ENCODE measurements at regions of chr5 and their contacts with region 1.

Region 1: DNA sequence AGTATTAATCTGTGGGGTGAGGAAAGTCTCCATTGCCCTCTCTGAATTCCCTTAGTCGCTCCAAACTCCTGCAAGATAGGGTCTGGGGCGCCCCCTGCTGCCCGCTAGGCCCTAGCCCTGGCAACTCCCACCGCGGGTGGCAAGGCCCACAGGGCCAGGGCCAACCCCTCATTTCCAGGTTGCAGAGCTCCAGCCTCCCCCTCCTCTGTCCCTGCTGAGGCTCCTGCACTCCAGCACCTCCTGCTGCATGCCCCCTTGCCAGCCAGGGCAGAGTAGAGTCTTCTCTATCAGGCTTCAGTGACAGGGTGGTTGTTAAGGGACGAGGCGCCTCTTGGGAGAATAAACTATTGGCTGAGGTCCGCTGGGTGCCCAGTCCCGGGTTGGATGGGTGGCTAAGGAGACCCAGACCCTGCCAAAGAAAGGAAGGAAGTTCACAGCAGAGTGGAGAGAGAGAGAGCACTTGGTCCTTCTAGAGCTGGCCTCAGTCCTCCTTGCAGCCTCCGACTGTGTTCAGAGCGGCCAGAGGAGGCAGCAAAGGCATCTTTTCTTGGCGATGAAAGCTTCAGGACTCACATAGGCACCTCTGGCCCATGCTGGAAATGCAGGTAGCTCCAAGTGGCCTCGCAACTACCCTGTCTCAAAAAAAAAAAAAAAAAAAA is 45.6 kb downstream of the SAR1B start:
- DNase-seq: peak; percentile 89
- H3K4me3 ChIP-seq: no peak overlapping the region
- H3K27ac ChIP-seq: no peak overlapping the region
- H3K4me1 ChIP-seq: no peaks in the 10 kb centered on the region
- H3K27me3 ChIP-seq: no peaks in the 10 kb centered on the region

Region 2: DNA sequence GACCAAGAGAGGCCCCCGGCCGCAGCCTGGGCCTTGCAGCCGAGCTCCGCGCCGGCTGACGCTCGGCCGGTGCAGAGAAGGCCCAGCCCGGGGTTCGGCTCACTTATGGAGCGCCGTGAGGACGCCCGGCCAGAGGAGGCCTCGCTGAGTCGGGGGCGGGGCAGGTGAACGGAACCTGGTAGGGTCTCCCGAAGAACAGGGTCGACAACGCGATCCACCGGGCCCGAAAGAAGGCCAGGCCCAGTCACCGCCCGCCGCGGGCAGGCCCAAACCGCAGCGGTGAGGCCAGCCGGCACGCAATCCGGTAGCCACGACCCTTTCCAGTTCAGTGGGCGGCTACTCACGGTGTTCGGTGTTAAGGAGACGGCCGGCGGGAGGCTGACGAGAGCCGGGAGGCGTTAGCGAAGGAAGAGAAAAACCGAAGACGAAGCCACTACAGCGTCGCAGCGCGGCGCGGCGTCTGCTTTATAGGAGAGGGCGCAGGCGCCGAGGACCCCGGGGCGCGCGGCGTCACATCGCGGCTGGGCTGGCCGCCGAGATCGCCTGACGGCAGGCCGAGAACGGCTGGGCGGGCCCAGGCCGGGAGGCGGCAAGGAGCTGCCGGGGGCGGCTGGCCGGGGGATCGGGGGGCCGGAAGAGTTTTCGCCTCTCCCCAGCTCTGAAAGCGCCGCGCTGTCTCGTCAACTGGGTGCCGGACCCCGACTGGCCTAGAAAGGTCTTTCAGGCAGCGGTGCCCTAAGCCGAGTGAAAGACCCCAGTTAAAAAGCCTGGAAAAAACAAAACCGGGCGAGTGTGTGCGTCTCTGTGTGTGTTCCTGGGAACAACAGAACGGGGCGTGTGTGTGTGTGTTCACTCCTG is 410.3 kb before region 1 on chr5 and contains the start of gene SKP1:
- in situ Hi-C with region 1: loop called (anchors 25 kb)
- DNase-seq: peak; percentile 92
- H3K4me3 ChIP-seq: peak within 1 kb of the TSS; percentile 87
- H3K27ac ChIP-seq: peak within 1 kb of the TSS; percentile 91
- H3K4me1 ChIP-seq: peaks cover 17% of the 10 kb centered on the region
- H3K27me3 ChIP-seq: no peaks in the 10 kb centered on the region
- total RNA-seq, gene SKP1: 238 and 245 TPM in 2 replicates

Region 3: GRCh38 chr5:134304311-134304710 is 282.7 kb before region 1 on chr5:
- in situ Hi-C with region 1: loop called (anchors 10 kb)
- DNase-seq: no peak
- H3K4me3 ChIP-seq: no peak overlapping the region
- H3K27ac ChIP-seq: no peak overlapping the region
- H3K4me1 ChIP-seq: no peaks in the 10 kb centered on the region
- H3K27me3 ChIP-seq: no peaks in the 10 kb centered on the region